ENCODE measurements at regions of chr16 and their contacts with region 1.

Region 1: GRCh38 chr16:12803203-12804097 is at the start of gene CPPED1:
- DNase-seq: peak; percentile 85 to 98 (median 91)
- ATAC-seq: peak; percentile 95
- H3K4me3 ChIP-seq: peak within 1 kb of the TSS; percentile 76
- H3K4me3 Mint-ChIP-seq: peak within 1 kb of the TSS; percentile 86 to 96 (median 90)
- H3K27ac ChIP-seq: peak within 1 kb of the TSS; percentile 71
- H3K27ac Mint-ChIP-seq: peak within 1 kb of the TSS; percentile 59 to 92 (median 91)
- H3K4me1 ChIP-seq: peaks cover 3 to 9% of the 10 kb centered on the region in 2 donors
- H3K4me1 Mint-ChIP-seq: peaks cover 9 to 37% (median 22%) of the 10 kb centered on the region in 7 donors
- H3K27me3 ChIP-seq: no peaks in the 10 kb centered on the region
- H3K27me3 Mint-ChIP-seq: peaks cover 0 to 8% (median 0%) of the 10 kb centered on the region in 5 donors
- total RNA-seq, gene CPPED1: 2.4 to 56.5 (median 5.3) TPM

Region 2: DNA sequence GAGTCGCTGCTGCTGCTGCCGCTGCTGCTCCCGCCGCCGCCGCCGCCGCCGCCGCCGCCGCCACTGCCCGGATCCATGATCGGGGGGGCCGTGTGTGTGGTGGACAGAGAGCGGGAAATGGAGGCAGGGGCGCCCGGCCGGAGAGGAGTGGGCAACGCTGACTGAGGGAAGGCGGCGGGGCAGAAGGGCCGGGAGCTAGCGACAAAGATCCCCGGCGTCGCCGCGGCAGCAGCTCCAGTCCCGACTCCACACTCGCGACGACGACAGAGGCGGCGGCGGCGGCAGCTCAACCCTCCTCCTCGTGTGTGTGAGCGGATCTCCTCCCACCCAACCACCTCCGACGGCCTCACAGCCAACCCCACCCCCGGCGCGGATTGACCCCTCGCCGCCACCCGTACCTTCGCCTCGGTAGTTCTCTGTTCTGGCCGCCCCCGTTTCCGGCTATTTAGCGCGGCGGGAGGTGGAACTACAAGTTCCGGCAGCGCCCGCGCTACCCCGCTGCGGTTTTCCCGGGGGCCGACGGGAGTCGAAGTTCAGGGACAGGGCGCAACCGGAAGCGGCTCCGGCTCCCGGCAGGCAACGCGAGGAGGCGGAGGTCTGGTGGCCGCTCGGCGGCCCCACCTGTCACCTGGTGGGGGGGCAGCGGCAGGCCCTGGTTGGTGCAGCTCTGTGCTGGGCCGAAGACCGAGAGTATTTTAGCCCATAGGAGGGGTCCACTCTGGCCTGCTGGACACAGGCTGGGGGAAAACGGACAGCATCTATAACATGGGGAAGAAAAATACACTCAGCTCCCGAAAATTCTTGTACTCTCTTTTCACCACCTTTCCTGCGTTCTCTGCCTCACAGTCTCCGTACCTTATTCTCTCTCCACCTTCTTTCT is 887.6 kb before region 1 on chr16 and contains the start of gene GSPT1:
- CTCF ChIA-PET with region 1: no interaction called
- POLR2A ChIA-PET with region 1: no interaction called
- intact Hi-C with region 1: loop called in 1 of 2 experiments (anchors 5 kb)
- DNase-seq: peak; percentile 96 to 100 (median 99)
- ATAC-seq: peak; percentile 94
- H3K4me3 ChIP-seq: peak within 1 kb of the TSS; percentile 74
- H3K4me3 Mint-ChIP-seq: peak within 1 kb of the TSS; percentile 85 to 99 (median 96)
- H3K27ac ChIP-seq: peak within 1 kb of the TSS; percentile 87
- H3K27ac Mint-ChIP-seq: peak within 1 kb of the TSS; percentile 87 to 98 (median 95)
- H3K4me1 ChIP-seq: peaks cover 13 to 24% of the 10 kb centered on the region in 2 donors
- H3K4me1 Mint-ChIP-seq: peaks cover 23 to 37% (median 34%) of the 10 kb centered on the region in 7 donors
- H3K27me3 ChIP-seq: no peaks in the 10 kb centered on the region
- H3K27me3 Mint-ChIP-seq: peaks cover 0 to 10% (median 0%) of the 10 kb centered on the region in 5 donors
- total RNA-seq, gene GSPT1: 92.8 to 148 (median 101) TPM

Region 3: GRCh38 chr16:12079412-12079965 is 724.0 kb before region 1 on chr16:
- CTCF ChIA-PET with region 1: no interaction called
- POLR2A ChIA-PET with region 1: interaction called, 4 read pairs
- intact Hi-C with region 1: loop called (anchors 1 to 5 kb)
- DNase-seq: peak in 5 of 9 donors; percentile 42 to 61 (median 52)
- ATAC-seq: peak; percentile 34
- H3K4me3 ChIP-seq: peak overlapping the region; percentile 24
- H3K4me3 Mint-ChIP-seq: peak overlapping the region; percentile 54 to 94 (median 78)
- H3K27ac ChIP-seq: peak overlapping the region; percentile 84
- H3K27ac Mint-ChIP-seq: peak overlapping the region; percentile 88 to 97 (median 96)
- H3K4me1 ChIP-seq: peaks cover 40 to 66% of the 10 kb centered on the region in 2 donors
- H3K4me1 Mint-ChIP-seq: peaks cover 34 to 93% (median 77%) of the 10 kb centered on the region in 7 donors
- H3K27me3 ChIP-seq: no peaks in the 10 kb centered on the region
- H3K27me3 Mint-ChIP-seq: no peaks in the 10 kb centered on the region

Region 4: DNA sequence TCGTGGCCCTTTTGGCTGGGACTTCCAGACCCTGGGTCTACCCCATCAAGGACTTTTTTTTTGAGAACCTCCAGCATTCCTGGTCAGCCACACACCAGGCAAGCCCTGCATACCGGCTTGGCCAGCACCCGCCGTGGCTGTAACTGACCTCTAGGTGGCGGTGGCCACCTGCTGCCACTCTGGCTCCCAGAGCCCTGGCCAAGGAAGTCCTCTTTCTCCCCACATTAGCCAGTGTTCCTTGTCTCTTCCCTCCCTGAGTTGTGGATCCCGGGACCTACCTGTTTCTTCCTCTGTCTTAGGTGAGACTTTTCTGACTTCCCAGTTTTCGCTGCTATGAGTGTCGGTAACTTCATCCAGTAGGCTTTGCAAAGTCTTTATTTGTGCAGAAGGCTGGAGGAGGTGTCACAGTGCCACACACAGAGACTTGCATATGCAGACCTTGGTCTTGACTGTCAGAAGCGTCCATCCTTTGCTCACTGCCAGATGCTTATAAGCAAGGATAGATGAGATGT is 348.1 kb before region 1 on chr16:
- CTCF ChIA-PET with region 1: no interaction called
- POLR2A ChIA-PET with region 1: interaction called, 14 read pairs
- intact Hi-C with region 1: loop called in 1 of 2 experiments (anchors 5 kb)
- DNase-seq: peak in 6 of 9 donors; percentile 19 to 55 (median 22)
- ATAC-seq: peak; percentile 54
- H3K4me3 ChIP-seq: no peak overlapping the region
- H3K4me3 Mint-ChIP-seq: no peak overlapping the region
- H3K27ac ChIP-seq: no peak overlapping the region
- H3K27ac Mint-ChIP-seq: peak overlapping the region in 3 of 9 donors; percentile 19 to 43 (median 26)
- H3K4me1 ChIP-seq: peaks cover 0 to 24% of the 10 kb centered on the region in 2 donors
- H3K4me1 Mint-ChIP-seq: peaks cover 28 to 44% (median 35%) of the 10 kb centered on the region in 7 donors
- H3K27me3 ChIP-seq: no peaks in the 10 kb centered on the region
- H3K27me3 Mint-ChIP-seq: no peaks in the 10 kb centered on the region

Region 5: DNA sequence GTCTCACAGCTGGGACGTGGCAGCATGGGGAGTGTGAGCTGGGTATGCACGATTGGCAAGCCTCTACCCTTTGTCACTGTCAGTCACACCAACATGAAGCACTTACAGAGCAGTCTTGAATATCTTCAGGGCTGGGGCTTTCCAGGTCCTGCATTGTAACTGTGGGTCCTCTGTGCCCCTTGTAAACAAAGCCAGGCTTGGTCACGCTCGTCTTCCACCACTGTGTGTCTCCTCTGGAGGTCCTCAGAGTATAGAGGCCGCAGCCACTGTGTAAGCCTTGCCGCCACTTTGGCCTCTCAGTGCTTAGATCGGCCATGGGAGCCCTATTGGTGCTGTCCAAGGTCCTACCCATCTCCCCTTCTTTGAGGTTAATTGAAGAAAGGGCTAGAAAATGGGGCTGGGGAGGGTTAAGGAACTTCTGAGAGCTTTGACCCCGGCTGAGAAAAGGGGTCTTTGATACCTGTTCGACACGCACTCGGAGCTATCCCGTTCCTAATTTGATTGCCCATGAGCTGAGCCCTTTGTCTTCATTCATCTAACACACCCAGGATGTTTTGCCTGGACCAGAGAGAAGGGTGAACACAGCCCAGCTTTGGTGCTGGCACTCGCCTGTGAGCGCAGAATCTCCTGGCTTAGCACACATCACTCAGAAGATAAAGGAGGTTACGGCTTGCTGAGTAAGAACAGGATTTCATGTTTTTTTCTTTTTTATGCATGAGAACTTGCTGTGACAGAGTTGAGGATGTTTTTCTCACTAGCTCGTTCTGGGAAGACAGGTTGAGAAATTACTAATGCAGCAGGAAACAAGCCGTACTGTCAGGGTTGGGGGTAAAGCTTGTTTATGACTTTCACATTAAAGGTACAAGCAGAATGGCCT is 267.7 kb before region 1 on chr16:
- CTCF ChIA-PET with region 1: no interaction called
- POLR2A ChIA-PET with region 1: no interaction called
- intact Hi-C with region 1: loop called in 1 of 2 experiments (anchors 5 kb)
- DNase-seq: peak in 4 of 9 donors; percentile 23 to 46 (median 37)
- ATAC-seq: peak; percentile 40
- H3K4me3 ChIP-seq: no peak overlapping the region
- H3K4me3 Mint-ChIP-seq: peak overlapping the region in 9 of 10 donors; percentile 7 to 70 (median 50)
- H3K27ac ChIP-seq: no peak overlapping the region
- H3K27ac Mint-ChIP-seq: peak overlapping the region in 5 of 9 donors; percentile 5 to 94 (median 68)
- H3K4me1 ChIP-seq: peaks cover 15 to 40% of the 10 kb centered on the region in 2 donors
- H3K4me1 Mint-ChIP-seq: peaks cover 44 to 96% (median 72%) of the 10 kb centered on the region in 7 donors
- H3K27me3 ChIP-seq: no peaks in the 10 kb centered on the region
- H3K27me3 Mint-ChIP-seq: no peaks in the 10 kb centered on the region

Region 6: DNA sequence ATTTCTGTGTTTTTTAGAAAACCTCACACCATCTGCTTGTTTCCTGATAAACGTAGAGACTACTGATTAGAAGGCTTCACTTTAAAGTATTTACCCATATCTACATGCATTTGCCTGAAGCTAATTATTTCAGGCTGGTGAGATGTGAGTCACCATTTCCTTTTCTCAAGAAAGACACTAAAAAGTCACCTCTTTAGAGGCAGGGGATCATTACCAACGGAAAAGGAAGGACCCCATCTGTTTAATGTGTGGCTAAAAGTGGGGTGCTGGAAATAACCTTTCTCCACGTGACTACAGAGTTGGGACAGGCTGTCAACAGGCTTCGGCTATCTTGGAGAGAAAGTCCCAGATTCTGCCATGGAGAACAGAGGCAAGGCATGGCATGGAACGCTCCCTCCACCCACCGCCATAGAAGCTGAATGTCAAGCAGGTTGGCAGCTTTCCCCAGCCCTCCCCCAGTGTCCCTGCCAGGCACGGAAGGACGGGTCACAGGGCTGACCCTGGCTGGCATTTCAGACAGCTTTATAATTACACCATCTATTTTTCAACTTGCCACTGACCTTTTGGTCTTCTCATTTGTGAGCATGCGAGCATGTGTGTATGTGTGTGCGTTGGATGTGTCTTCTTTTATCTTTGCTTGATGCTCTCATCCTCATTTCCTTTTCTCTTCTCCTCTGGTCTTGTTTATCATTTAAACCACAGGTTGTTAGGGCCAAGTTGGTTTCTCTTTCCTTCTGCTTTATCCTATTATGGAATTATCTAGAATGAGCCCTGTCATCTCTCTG is 156.8 kb before region 1 on chr16:
- CTCF ChIA-PET with region 1: no interaction called
- POLR2A ChIA-PET with region 1: no interaction called
- intact Hi-C with region 1: loop called in 1 of 2 experiments (anchors 5 kb)
- DNase-seq: peak in 5 of 9 donors; percentile 13 to 39 (median 31)
- ATAC-seq: peak; percentile 37
- H3K4me3 ChIP-seq: no peak overlapping the region
- H3K4me3 Mint-ChIP-seq: peak overlapping the region in 6 of 10 donors; percentile 20 to 63 (median 34)
- H3K27ac ChIP-seq: peak overlapping the region; percentile 1
- H3K27ac Mint-ChIP-seq: peak overlapping the region in 3 of 9 donors; percentile 11 to 95 (median 56)
- H3K4me1 ChIP-seq: peaks cover 0 to 9% of the 10 kb centered on the region in 2 donors
- H3K4me1 Mint-ChIP-seq: peaks cover 13 to 30% (median 20%) of the 10 kb centered on the region in 7 donors
- H3K27me3 ChIP-seq: no peaks in the 10 kb centered on the region
- H3K27me3 Mint-ChIP-seq: peaks cover 0 to 5% (median 0%) of the 10 kb centered on the region in 5 donors

Region 7: GRCh38 chr16:12750554-12750918 is 52.9 kb before region 1 on chr16:
- CTCF ChIA-PET with region 1: no interaction called
- POLR2A ChIA-PET with region 1: no interaction called
- intact Hi-C with region 1: loop called in 1 of 2 experiments (anchors 5 kb)
- DNase-seq: no peak
- ATAC-seq: no peak
- H3K4me3 ChIP-seq: no peak overlapping the region
- H3K4me3 Mint-ChIP-seq: peak overlapping the region in 1 of 10 donors; percentile 65
- H3K27ac ChIP-seq: no peak overlapping the region
- H3K27ac Mint-ChIP-seq: peak overlapping the region in 1 of 9 donors; percentile 89
- H3K4me1 ChIP-seq: no peaks in the 10 kb centered on the region
- H3K4me1 Mint-ChIP-seq: peaks cover 0 to 34% (median 6%) of the 10 kb centered on the region in 7 donors
- H3K27me3 ChIP-seq: no peaks in the 10 kb centered on the region
- H3K27me3 Mint-ChIP-seq: no peaks in the 10 kb centered on the region